CD4-positive, alpha-beta memory T cell (primary cell): ENCODE measurements at regions of chr15 and their contacts with region 1.

Region 1: GRCh38 chr15:40307421-40308211 is at the start of gene PLCB2:
- DNase-seq: peak; percentile 73 to 80 (median 76)
- H3K4me3 ChIP-seq: peak within 1 kb of the TSS; percentile 84 to 98
- H3K4me3 Mint-ChIP-seq: peak within 1 kb of the TSS; percentile 94 to 98 (median 96)
- H3K27ac ChIP-seq: peak within 1 kb of the TSS; percentile 79
- H3K27ac Mint-ChIP-seq: peak within 1 kb of the TSS; percentile 93 to 98 (median 96)
- H3K4me1 ChIP-seq: peaks cover 44% of the 10 kb centered on the region
- H3K4me1 Mint-ChIP-seq: peaks cover 28 to 68% (median 39%) of the 10 kb centered on the region in 4 donors
- H3K27me3 ChIP-seq: no peaks in the 10 kb centered on the region
- H3K27me3 Mint-ChIP-seq: no peaks in the 10 kb centered on the region
- total RNA-seq, gene PLCB2: 211 to 219 TPM

Region 2: GRCh38 chr15:39878406-39878785 is 429.2 kb before region 1 on chr15:
- CTCF ChIA-PET with region 1: no interaction called
- POLR2A ChIA-PET with region 1: no interaction called
- intact Hi-C with region 1: no loop called
- DNase-seq: no peak
- H3K4me3 ChIP-seq: no peak overlapping the region
- H3K4me3 Mint-ChIP-seq: no peak overlapping the region
- H3K27ac ChIP-seq: no peak overlapping the region
- H3K27ac Mint-ChIP-seq: no peak overlapping the region
- H3K4me1 ChIP-seq: no peaks in the 10 kb centered on the region
- H3K4me1 Mint-ChIP-seq: peaks cover 0 to 3% (median 0%) of the 10 kb centered on the region in 4 donors
- H3K27me3 ChIP-seq: no peaks in the 10 kb centered on the region
- H3K27me3 Mint-ChIP-seq: peaks cover 8 to 11% of the 10 kb centered on the region in 2 donors

Region 3: DNA sequence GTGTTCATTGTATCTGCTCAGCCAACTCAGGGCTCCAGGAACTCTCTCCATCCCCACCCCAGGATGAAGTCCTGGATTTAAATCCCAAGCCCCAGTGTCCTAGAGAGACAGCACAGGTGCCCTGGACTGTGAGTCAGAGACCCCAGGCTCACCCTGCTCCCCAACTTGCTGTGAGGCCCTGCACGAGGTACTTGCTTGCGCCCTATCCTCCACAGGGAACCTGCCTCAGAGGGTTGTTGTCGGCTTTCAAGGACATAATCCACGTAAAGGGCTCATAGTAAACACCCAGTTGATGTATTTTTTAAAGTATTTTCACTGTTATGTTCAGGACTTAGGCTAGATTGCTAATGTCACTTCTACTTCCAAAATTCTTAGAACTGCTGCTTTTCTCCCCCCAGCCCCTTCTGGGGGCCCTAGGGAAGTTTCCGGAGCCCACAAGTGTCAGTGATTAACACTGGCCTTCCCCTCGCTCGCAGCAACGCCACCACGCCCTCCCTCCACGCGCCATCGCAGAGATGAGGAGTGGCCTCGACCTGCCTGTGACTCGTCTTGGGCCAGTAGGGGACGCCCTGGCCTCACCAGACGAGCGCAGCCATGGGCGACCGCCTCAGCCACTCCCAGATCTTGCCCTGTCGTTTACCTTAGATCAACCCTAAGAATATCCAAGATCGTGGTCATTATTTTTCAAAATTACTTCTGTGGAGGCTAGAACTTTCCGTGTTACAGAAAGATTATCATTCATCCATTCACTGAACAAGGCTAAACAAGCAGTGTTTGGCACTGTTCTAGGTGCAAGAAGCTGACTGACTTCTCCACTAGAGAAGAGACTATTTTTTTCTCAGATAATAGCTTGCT is 262.7 kb before region 1 on chr15:
- CTCF ChIA-PET with region 1: interaction called, 7 read pairs
- POLR2A ChIA-PET with region 1: interaction called, 16 read pairs
- intact Hi-C with region 1: no loop called
- DNase-seq: peak; percentile 70 to 82 (median 75)
- H3K4me3 ChIP-seq: peak overlapping the region in 1 of 2 donors; percentile 1
- H3K4me3 Mint-ChIP-seq: peak overlapping the region; percentile 1 to 73 (median 46)
- H3K27ac ChIP-seq: peak overlapping the region; percentile 24
- H3K27ac Mint-ChIP-seq: peak overlapping the region in 6 of 7 donors; percentile 47 to 91 (median 73)
- H3K4me1 ChIP-seq: peaks cover 55% of the 10 kb centered on the region
- H3K4me1 Mint-ChIP-seq: peaks cover 36 to 61% (median 41%) of the 10 kb centered on the region in 4 donors
- H3K27me3 ChIP-seq: no peaks in the 10 kb centered on the region
- H3K27me3 Mint-ChIP-seq: no peaks in the 10 kb centered on the region

Region 4: GRCh38 chr15:40282144-40282868 is 25.3 kb before region 1 on chr15:
- CTCF ChIA-PET with region 1: interaction called, 427 read pairs
- POLR2A ChIA-PET with region 1: interaction called, 67 read pairs
- intact Hi-C with region 1: loop called (anchors 1 kb)
- DNase-seq: peak; percentile 42 to 62 (median 53)
- H3K4me3 ChIP-seq: peak overlapping the region in 1 of 2 donors; percentile 57
- H3K4me3 Mint-ChIP-seq: peak overlapping the region; percentile 36 to 78 (median 58)
- H3K27ac ChIP-seq: no peak overlapping the region
- H3K27ac Mint-ChIP-seq: no peak overlapping the region
- H3K4me1 ChIP-seq: peaks cover 13% of the 10 kb centered on the region
- H3K4me1 Mint-ChIP-seq: peaks cover 2 to 9% (median 4%) of the 10 kb centered on the region in 4 donors
- H3K27me3 ChIP-seq: peaks cover 6% of the 10 kb centered on the region
- H3K27me3 Mint-ChIP-seq: peaks cover 11 to 22% of the 10 kb centered on the region in 2 donors

Region 5: DNA sequence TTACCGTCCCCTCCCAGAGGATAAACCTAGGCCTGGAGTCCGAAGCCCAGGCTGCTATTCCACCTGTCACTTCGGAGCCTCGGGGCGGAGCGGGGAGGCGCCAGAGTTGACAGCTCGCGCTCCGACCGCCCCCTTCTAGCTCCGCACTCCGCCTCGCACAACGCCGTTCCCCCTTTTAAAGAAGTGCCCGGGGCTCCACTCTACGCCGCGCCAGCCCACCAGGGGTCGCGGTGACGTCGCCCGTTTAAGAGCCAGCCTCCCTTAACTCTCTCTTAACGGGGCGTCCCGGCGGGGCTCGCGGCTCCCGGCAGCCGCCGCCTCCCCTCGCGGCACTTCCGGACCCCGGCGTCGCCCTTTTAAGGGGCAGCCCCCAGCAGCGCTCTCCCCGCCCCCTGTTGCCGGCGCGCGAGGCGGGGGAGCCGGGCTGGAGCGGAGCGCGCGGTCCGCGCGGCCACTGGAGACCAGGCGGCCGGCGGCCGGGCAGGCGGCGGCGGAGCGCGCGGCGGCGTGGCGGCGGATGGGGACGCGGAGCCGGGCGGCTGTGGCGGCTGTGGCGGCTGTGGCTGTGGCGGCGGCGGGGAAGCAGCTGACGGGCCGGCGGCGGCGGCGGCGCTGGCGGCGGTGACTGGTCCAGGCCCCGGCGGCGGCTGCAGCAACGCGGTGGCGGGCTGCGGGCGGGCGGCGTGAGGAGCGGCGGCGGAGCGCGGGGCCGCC is 15.8 kb after region 1 on chr15 and contains the start of gene INAFM2:
- CTCF ChIA-PET with region 1: interaction called, 634 read pairs
- POLR2A ChIA-PET with region 1: interaction called, 90 read pairs
- intact Hi-C with region 1: loop called (anchors 1 kb)
- DNase-seq: peak; percentile 88 to 90 (median 89)
- H3K4me3 ChIP-seq: peak within 1 kb of the TSS in 1 of 2 donors; percentile 56
- H3K4me3 Mint-ChIP-seq: peak within 1 kb of the TSS; percentile 79 to 89 (median 86)
- H3K27ac ChIP-seq: peak within 1 kb of the TSS; percentile 29
- H3K27ac Mint-ChIP-seq: peak within 1 kb of the TSS; percentile 36 to 93 (median 88)
- H3K4me1 ChIP-seq: peaks cover 22% of the 10 kb centered on the region
- H3K4me1 Mint-ChIP-seq: peaks cover 16 to 35% (median 25%) of the 10 kb centered on the region in 4 donors
- H3K27me3 ChIP-seq: no peaks in the 10 kb centered on the region
- H3K27me3 Mint-ChIP-seq: peaks cover 0 to 7% of the 10 kb centered on the region in 2 donors
- total RNA-seq, gene INAFM2: 7.2 to 7.5 TPM

Region 6: DNA sequence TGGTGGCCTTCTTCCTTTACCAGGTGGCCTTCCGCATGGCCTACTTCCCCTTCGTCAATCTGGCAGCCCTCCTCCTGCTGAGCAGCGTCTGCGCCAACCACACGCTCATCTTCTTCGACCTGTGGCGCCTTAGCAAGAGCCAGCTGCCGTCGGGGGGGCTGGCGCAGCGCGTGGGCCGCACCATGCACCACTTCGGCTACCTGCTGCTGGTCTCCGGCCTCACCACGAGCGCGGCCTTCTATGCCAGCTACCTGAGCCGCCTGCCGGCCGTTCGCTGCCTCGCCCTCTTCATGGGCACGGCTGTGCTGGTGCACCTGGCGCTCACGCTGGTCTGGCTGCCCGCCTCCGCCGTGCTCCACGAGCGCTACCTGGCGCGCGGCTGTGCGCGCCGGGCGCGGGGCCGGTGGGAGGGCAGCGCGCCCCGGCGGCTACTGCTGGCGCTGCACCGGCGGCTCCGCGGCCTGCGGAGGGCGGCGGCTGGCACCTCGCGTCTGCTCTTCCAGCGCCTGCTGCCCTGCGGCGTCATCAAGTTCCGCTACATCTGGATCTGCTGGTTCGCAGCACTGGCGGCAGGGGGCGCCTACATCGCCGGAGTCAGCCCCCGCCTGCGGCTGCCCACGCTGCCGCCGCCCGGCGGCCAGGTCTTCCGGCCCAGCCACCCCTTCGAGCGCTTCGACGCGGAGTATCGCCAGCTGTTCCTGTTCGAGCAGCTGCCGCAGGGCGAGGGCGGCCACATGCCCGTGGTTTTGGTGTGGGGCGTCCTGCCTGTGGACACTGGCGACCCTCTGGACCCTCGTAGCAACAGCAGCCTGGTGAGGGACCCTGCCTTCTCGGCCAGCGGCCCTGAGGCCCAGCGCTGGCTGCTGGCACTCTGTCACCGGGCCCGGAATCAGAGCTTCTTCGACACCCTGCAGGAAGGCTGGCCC is 60.3 kb after region 1 on chr15:
- CTCF ChIA-PET with region 1: interaction called, 3 read pairs
- POLR2A ChIA-PET with region 1: interaction called, 13 read pairs
- intact Hi-C with region 1: no loop called
- DNase-seq: peak; percentile 88 to 91 (median 89)
- H3K4me3 ChIP-seq: peak overlapping the region in 1 of 2 donors; percentile 45
- H3K4me3 Mint-ChIP-seq: peak overlapping the region; percentile 80 to 88 (median 85)
- H3K27ac ChIP-seq: peak overlapping the region; percentile 34
- H3K27ac Mint-ChIP-seq: peak overlapping the region; percentile 79 to 90 (median 86)
- H3K4me1 ChIP-seq: peaks cover 24% of the 10 kb centered on the region
- H3K4me1 Mint-ChIP-seq: peaks cover 11 to 27% (median 18%) of the 10 kb centered on the region in 4 donors
- H3K27me3 ChIP-seq: no peaks in the 10 kb centered on the region
- H3K27me3 Mint-ChIP-seq: no peaks in the 10 kb centered on the region

Region 7: GRCh38 chr15:40440743-40441564 is 133.3 kb after region 1 on chr15 and contains the start of gene BAHD1:
- CTCF ChIA-PET with region 1: no interaction called
- POLR2A ChIA-PET with region 1: interaction called, 10 read pairs
- intact Hi-C with region 1: no loop called
- DNase-seq: peak; percentile 89 to 93 (median 90)
- H3K4me3 ChIP-seq: peak within 1 kb of the TSS; percentile 62 to 65
- H3K4me3 Mint-ChIP-seq: peak within 1 kb of the TSS; percentile 91 to 96 (median 93)
- H3K27ac ChIP-seq: peak within 1 kb of the TSS; percentile 49
- H3K27ac Mint-ChIP-seq: peak within 1 kb of the TSS; percentile 87 to 94 (median 92)
- H3K4me1 ChIP-seq: peaks cover 67% of the 10 kb centered on the region
- H3K4me1 Mint-ChIP-seq: peaks cover 49 to 83% (median 60%) of the 10 kb centered on the region in 4 donors
- H3K27me3 ChIP-seq: peaks cover 12% of the 10 kb centered on the region
- H3K27me3 Mint-ChIP-seq: peaks cover 13% of the 10 kb centered on the region in 2 donors
- total RNA-seq, gene BAHD1: 47.0 to 49.2 TPM